ENCODE measurements at regions of chr20 and their contacts with region 1.

Region 1: GRCh38 chr20:1862663-1863053 is 32.5 kb upstream of the SIRPA start:
- DNase-seq: no peak
- H3K4me3 ChIP-seq: no peak overlapping the region
- CTCF ChIP-seq: no peak
- POLR2A ChIP-seq: no peak

Region 2: DNA sequence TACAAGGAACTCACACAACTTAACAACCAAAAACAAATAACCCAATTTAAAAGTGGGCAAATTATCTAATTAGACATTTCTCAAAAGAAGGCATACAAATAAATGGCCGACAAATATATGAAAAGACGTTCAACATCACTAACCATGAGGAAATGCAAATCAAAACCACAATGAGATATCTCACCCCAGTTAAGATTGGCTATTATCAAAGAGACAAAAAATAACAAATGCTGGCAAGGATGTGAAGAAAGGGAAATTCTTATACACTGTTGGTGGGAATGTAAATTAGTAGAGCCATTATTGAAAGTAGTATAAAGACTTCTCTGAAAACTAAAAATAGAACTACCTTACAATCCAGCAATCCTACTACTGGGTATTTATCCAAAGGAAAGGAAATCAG is 108.4 kb before region 1 on chr20:
- intact Hi-C with region 1: no loop called
- DNase-seq: no peak
- H3K4me3 ChIP-seq: no peak overlapping the region
- CTCF ChIP-seq: no peak
- POLR2A ChIP-seq: no peak

Region 3: DNA sequence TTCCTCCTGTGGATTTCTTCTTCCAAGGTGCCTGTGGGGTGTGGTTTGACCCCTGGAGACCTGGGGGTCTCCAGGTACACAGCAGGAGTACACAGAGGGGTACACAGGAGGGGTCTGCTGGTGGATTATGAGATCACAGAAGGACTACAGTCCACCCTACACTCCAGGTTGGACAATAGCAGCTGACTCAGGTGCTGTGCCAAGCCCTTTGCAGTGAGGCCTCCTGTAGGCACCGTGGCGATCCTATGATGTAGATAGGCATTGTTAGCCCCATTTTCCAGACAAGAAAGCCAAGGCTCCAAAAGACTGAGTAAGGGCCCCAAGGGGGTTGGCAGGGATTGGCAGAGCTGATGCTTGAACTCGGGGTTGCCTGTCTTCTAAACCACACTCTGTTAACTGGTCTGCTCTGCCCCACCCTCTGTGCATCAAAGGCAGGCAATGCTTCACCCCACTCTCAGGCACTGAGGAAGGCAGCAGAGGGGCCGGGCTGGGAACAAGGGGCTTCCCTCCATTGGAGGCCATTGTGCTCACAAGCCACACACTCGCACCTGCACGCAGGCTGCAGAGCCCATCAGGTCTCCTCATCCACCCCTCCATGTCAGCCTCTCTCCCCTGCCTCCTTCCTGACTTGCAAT is 45.0 kb before region 1 on chr20:
- intact Hi-C with region 1: loop called (anchors 1 kb)
- DNase-seq: peak in 1 of 2 donors; percentile 76
- H3K4me3 ChIP-seq: no peak overlapping the region
- CTCF ChIP-seq: no peak
- POLR2A ChIP-seq: no peak